Gastrocnemius medialis (tissue), 4 donors: ENCODE measurements at regions of chr9 and their contacts with region 1.

Region 1: GRCh38 chr9:122810306-122810946 is 10.5 kb downstream of the OR1K1 start:
- DNase-seq: peak; percentile 35 to 62
- ATAC-seq: peak; percentile 89 to 94
- H3K4me3 ChIP-seq: no peak overlapping the region
- H3K27ac ChIP-seq: no peak overlapping the region
- H3K4me1 ChIP-seq: no peaks in the 10 kb centered on the region
- H3K27me3 ChIP-seq: no peaks in the 10 kb centered on the region
- CTCF ChIP-seq: peak; percentile 74 to 80 (median 77)
- POLR2A ChIP-seq: no peak

Region 2: GRCh38 chr9:122099271-122099869 is 711.1 kb before region 1 on chr9:
- in situ Hi-C with region 1: loop called in 2 of 4 experiments (anchors 25 kb)
- intact Hi-C with region 1: loop called (anchors 1 kb)
- DNase-seq: peak; percentile 47 to 74
- ATAC-seq: peak; percentile 72 to 85
- H3K4me3 ChIP-seq: peak overlapping the region in 3 of 4 donors; percentile 8 to 61 (median 45)
- H3K27ac ChIP-seq: no peak overlapping the region
- H3K4me1 ChIP-seq: peaks cover 4 to 18% of the 10 kb centered on the region in 2 donors
- H3K27me3 ChIP-seq: no peaks in the 10 kb centered on the region
- CTCF ChIP-seq: peak; percentile 74 to 91 (median 87)
- POLR2A ChIP-seq: no peak

Region 3: DNA sequence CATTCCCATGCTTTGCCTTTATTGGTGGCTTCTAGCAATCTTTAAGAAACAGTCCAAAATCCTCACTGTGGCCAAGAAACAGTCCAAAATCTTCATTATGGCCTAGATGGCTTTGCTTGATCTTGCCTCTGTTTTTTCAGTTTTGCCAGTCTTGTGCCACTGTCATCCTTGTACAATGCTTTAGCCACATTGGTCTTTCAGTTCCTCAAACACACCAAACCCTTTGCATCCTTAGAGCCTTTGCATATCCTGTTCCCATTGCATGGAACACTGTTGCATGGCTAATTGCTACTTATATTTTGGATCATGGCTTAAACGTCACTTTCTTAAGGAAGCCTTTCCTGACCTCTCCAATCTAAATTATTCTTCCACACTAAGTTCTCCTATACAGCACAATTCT is 523.7 kb before region 1 on chr9:
- in situ Hi-C with region 1: loop called in 1 of 4 experiments (anchors 25 kb)
- intact Hi-C with region 1: no loop called
- DNase-seq: no peak
- ATAC-seq: no peak
- H3K4me3 ChIP-seq: no peak overlapping the region
- H3K27ac ChIP-seq: no peak overlapping the region
- H3K4me1 ChIP-seq: no peaks in the 10 kb centered on the region
- H3K27me3 ChIP-seq: no peaks in the 10 kb centered on the region
- CTCF ChIP-seq: no peak
- POLR2A ChIP-seq: no peak

Region 4: GRCh38 chr9:122350638-122351355 is 459.6 kb before region 1 on chr9:
- in situ Hi-C with region 1: loop called in 1 of 4 experiments (anchors 25 kb)
- intact Hi-C with region 1: no loop called
- DNase-seq: peak; percentile 50 to 65
- ATAC-seq: peak; percentile 80 to 88
- H3K4me3 ChIP-seq: no peak overlapping the region
- H3K27ac ChIP-seq: no peak overlapping the region
- H3K4me1 ChIP-seq: peaks cover 0 to 8% of the 10 kb centered on the region in 2 donors
- H3K27me3 ChIP-seq: no peaks in the 10 kb centered on the region
- CTCF ChIP-seq: peak; percentile 92 to 96 (median 96)
- POLR2A ChIP-seq: no peak

Region 5: DNA sequence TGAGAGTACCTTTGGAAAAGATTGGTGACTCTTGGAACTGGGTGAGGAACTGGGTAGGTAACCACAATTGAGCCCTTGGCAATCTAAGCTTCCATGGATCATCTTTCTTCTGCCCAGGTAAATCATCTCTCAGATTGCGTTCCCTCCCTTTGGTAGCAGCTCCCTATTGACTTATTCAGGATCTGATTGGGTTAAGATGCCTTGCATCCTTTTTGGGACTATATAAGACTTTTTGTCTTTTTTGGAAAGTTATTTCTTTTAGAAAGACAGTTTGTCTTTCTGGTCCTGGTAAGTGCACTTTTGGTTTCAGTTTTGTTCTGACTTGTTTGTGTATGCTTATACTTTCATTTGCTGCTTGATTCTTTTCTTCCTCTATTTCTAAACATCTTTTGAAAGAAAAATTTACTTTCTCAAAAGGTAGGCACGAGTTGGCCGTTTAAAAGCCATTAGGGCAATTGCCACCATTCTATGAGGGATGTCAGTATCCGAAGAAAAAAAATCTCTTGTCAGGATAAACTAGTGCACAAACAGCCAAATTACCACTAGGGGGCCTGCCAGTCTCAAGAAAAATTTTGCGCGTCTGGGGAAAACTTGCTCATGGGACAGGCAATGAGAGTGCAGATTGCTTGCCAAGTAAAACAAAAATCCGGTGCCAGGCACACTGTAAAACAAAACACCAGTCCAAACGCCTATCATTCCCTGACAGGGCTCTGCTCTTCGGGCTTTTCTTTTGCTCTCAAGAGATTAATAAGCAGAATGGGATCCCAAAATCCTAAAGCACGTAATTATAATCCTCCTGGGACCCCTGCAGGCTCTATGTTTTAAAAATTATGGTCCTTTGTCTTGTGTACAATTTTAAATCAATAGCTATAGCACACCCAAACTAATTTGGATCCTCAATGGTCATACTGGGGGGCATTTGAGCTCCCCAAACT is 345.5 kb before region 1 on chr9:
- in situ Hi-C with region 1: loop called (anchors 5 to 10 kb)
- intact Hi-C with region 1: loop called (anchors 1 kb)
- DNase-seq: peak; percentile 43 to 52
- ATAC-seq: peak; percentile 82 to 97
- H3K4me3 ChIP-seq: peak overlapping the region; percentile 26 to 62 (median 36)
- H3K27ac ChIP-seq: no peak overlapping the region
- H3K4me1 ChIP-seq: peaks cover 5 to 9% of the 10 kb centered on the region in 2 donors
- H3K27me3 ChIP-seq: peaks cover 0 to 3% (median 0%) of the 10 kb centered on the region in 3 donors
- CTCF ChIP-seq: peak; percentile 62 to 80 (median 71)
- POLR2A ChIP-seq: no peak

Region 6: DNA sequence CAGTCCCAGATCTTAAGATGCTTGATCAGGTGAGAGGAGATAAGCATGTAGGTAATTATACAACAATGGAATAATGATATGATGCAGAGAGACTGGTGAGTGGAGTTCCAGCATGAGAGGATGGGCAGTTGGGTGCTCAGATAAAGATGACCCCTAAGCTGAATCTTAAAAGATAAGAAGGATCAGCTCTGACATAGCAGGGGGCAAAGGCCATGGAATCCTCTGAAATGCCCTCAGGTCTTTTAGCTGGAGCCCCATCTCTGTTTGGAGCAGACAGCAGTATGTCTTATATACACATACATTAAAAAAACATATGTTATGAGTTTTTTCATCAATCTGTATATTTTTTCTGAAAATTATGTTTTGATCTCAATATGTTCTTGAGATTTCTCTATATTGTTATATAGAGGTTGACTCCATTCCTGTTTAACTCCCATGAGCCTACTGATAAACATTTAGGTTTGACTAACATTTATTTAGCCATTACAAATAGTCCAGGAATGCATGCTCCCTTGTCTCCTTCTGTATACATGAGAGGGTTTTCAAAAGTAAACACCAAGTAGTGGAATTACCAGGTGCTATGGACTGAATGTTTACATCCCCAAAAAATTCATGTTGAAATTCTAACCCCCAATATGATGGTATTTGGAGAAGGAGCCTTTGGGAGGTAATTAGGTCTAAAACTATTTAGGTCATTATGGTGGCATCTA is 25.3 kb before region 1 on chr9:
- in situ Hi-C with region 1: no loop called
- intact Hi-C with region 1: no loop called
- DNase-seq: no peak
- ATAC-seq: no peak
- H3K4me3 ChIP-seq: no peak overlapping the region
- H3K27ac ChIP-seq: no peak overlapping the region
- H3K4me1 ChIP-seq: no peaks in the 10 kb centered on the region
- H3K27me3 ChIP-seq: no peaks in the 10 kb centered on the region
- CTCF ChIP-seq: no peak
- POLR2A ChIP-seq: no peak

Region 7: DNA sequence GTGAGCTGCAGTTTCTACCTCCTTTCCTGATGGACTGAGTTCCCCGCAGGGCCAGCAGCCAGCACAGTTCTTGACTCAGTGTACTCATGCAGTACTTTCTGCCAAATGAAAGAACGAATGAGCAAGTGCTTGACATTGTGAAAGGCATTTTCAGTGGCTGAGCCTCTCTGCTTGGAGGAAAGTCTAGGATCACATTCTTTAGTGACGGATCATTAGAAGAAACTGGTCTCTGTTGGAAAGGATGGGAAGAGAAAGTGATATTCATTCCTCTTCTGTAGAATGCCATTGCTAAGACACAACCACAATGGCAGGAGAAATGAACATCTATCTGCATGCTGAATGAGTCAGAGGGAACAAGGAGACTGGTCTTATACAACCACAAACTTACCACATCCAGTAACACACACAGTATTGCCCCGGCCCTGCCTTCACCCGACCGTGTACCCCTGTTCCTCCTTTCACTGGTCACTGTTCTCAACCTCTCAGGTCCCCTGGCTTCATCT is 752.5 kb after region 1 on chr9:
- in situ Hi-C with region 1: no loop called
- intact Hi-C with region 1: no loop called
- DNase-seq: no peak
- ATAC-seq: no peak
- H3K4me3 ChIP-seq: no peak overlapping the region
- H3K27ac ChIP-seq: no peak overlapping the region
- H3K4me1 ChIP-seq: no peaks in the 10 kb centered on the region
- H3K27me3 ChIP-seq: no peaks in the 10 kb centered on the region
- CTCF ChIP-seq: no peak
- POLR2A ChIP-seq: no peak